Dorsolateral prefrontal cortex (tissue), 120 donors: ENCODE measurements at regions of chr17 and their contacts with region 1.

Region 1: DNA sequence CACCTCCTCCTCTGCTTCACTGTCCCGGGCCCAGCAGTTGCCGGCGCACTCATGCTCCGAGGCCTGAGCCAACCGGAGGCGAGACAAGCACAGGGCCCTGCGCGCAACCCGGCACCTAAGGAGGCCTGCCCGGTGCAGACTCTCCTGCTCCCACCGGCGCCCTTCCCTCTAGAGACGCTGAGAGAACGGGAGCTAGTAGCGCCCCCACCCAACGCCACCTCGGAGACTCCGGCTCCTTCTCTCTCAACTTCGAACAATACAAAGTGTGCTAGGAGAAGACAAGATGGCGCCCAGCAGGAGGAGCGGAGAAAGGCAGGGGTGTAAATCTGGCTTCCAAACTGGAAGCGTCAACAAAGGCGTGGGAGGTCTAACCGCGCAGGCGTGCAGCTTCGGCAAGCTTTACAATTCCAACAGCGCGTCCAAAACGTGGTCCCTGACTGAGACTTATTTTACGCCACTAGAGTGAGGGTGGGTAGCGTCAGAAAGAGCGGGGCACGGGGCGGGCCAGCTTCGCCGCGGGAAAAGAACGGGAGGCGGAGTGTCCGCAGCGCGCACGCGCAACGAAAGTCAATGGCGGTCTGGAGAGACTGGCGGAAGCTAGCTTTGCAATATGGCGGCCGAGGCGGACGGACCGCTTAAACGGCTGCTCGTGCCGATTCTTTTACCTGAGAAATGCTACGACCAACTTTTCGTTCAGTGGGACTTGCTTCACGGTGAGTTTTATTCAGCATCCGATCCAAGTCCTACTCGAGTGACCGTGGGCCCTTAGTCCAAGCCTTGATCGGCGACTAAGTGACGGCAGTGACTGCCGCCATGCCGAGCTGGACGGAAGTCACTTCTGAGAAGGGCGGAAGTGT is at the start of gene MPDU1:
- DNase-seq: peak; percentile 89 to 97 (median 96)
- H3K4me3 ChIP-seq: peak within 1 kb of the TSS; percentile 48 to 91 (median 72)
- H3K27ac ChIP-seq: peak within 1 kb of the TSS; percentile 91 to 100 (median 99)
- H3K27me3 ChIP-seq: no peaks in the 10 kb centered on the region
- CTCF ChIP-seq: peak in 34 of 56 donors; percentile 6 to 54 (median 28)
- total RNA-seq, gene MPDU1: 25.1 to 53.7 (median 34.4) TPM

Region 2: GRCh38 chr17:7266784-7267183 is 316.7 kb before region 1 on chr17:
- intact Hi-C with region 1: no loop called
- DNase-seq: no peak
- H3K4me3 ChIP-seq: no peak overlapping the region
- H3K27ac ChIP-seq: no peak overlapping the region
- H3K27me3 ChIP-seq: peaks cover 0 to 59% (median 33%) of the 10 kb centered on the region in 45 donors
- CTCF ChIP-seq: no peak

Region 3: GRCh38 chr17:7306911-7307686 is 276.4 kb before region 1 on chr17 and contains the start of gene EIF5A:
- intact Hi-C with region 1: loop called in 1 of 2 experiments (anchors 5 kb)
- DNase-seq: peak; percentile 98 to 99 (median 99)
- H3K4me3 ChIP-seq: peak within 1 kb of the TSS; percentile 62 to 93 (median 84)
- H3K27ac ChIP-seq: peak within 1 kb of the TSS; percentile 73 to 99 (median 98)
- H3K27me3 ChIP-seq: no peaks in the 10 kb centered on the region
- CTCF ChIP-seq: peak in 9 of 56 donors; percentile 0 to 31 (median 12)
- total RNA-seq, gene EIF5A: 117 to 216 (median 169) TPM

Region 4: GRCh38 chr17:7484067-7484918 is 99.2 kb before region 1 on chr17 and contains the start of gene POLR2A:
- intact Hi-C with region 1: loop called in 1 of 2 experiments (anchors 2 kb)
- DNase-seq: peak; percentile 96 to 98 (median 97)
- H3K4me3 ChIP-seq: peak within 1 kb of the TSS; percentile 61 to 98 (median 84)
- H3K27ac ChIP-seq: peak within 1 kb of the TSS; percentile 94 to 100 (median 100)
- H3K27me3 ChIP-seq: no peaks in the 10 kb centered on the region
- CTCF ChIP-seq: peak in 10 of 56 donors; percentile 4 to 61 (median 44)
- total RNA-seq, gene POLR2A: 83.5 to 163 (median 124) TPM

Region 5: GRCh38 chr17:7572588-7573323 is 10.7 kb before region 1 on chr17:
- intact Hi-C with region 1: loop called (anchors 1 kb)
- DNase-seq: peak in 9 of 10 donors; percentile 99 to 100 (median 100)
- H3K4me3 ChIP-seq: peak overlapping the region; percentile 64 to 100 (median 99)
- H3K27ac ChIP-seq: peak overlapping the region; percentile 86 to 100 (median 98)
- H3K27me3 ChIP-seq: no peaks in the 10 kb centered on the region
- CTCF ChIP-seq: peak in 17 of 56 donors; percentile 4 to 42 (median 16)